ENCODE measurements at regions of chr6 and their contacts with region 1.

Region 1: DNA sequence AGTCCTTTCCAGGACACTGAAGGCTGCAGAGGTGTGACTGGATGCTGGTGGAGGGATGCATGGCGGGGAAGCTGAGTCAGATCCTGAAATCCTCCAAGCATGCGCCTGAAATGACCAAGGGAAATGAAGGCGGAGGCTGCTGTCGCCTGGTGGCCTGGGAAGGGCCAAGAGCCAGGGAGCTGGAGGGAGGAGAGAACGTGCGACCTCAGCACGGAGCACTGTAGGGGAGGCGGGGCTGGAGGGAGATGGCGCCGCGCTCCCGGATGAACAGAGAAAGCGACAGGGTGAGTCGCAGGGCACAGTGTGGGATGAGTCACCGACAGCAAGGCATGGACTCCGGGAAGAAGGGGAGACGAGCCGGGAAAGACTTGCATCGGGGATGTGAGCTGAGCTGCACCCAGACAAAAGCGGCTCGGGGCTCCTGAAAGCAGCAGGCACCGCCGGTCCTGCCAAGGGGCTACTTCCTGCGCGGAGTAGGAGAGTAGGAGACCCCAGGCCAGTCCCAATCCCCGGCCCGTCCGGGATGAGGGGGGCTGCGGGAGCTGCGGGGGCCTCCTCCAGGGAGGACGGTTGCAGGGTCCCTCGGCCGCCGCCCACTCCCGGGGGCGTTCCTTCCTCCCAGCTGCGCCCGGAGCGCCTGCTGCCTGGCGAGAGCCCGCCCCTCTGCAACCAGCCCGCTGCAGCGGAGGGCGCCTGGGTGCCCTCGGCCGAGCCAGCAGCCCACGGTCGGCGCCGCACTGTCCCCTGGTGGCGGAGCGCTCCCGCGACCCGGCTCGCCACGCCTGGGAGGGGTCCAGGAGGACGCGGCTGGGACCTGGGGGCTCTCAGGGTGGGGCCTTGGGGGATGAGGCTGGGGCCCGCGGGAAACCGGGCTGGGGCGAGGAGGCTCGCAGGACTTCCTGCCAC is 11.0 kb upstream of the NQO2 start:
- DNase-seq: peak; percentile 67 to 88 (median 80)
- ATAC-seq: peak; percentile 73
- H3K4me3 Mint-ChIP-seq: peak overlapping the region; percentile 82 to 99 (median 96)
- H3K27ac Mint-ChIP-seq: peak overlapping the region; percentile 98 to 100 (median 100)
- H3K4me1 Mint-ChIP-seq: peaks cover 14 to 31% (median 28%) of the 10 kb centered on the region in 4 donors
- H3K27me3 Mint-ChIP-seq: no peaks in the 10 kb centered on the region

Region 2: DNA sequence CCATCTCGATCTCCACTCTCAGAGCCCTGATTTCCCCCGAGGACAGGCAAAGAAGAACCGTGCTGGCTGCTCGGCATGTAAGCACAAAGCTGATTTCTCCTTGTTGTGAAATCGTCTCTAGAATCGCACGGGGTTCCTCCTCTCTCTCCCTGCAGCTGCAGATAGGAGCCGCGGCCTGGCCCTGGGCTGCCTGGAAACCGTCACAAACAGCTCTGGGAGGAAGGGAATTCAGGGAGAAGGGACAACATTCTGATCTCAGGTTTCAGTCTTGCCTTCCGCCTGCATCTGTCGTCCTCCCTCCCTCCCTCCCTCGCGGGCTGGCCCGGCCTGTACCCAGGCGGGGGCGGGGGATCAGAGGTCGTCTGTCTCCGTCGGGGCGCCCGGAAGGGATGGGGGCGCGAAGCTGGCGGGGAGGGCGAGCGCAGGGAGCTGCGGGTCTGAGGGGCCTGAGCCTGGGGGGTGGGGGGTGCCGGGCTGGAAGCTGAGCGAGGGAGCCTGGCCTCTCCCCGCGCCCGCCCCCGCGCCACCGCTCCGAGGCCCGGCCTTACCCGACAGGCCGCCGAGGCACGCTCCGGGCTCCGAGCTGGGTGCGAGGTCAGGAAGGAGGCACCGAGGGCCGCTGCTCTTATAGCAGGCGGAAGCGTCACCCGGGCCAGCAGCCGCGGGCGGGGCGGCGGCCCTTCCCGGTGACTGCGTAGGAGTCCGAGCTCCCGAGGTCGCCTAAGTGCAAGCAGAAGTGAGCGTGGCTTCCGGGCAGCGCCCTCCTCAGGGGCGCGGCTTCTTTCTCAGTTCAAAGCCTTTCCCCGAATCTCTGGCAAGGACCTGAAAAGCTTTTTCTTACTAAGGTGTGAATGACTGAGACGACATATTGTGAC is 147.2 kb before region 1 on chr6 and contains the start of gene SERPINB1:
- POLR2A ChIA-PET with region 1: interaction called, 76 read pairs
- DNase-seq: peak; percentile 56 to 82 (median 66)
- ATAC-seq: peak; percentile 78
- H3K4me3 Mint-ChIP-seq: peak within 1 kb of the TSS; percentile 86 to 95 (median 90)
- H3K27ac Mint-ChIP-seq: peak within 1 kb of the TSS; percentile 86 to 97 (median 94)
- H3K4me1 Mint-ChIP-seq: peaks cover 22 to 71% (median 50%) of the 10 kb centered on the region in 4 donors
- H3K27me3 Mint-ChIP-seq: no peaks in the 10 kb centered on the region
- polyA plus RNA-seq, gene SERPINB1: 121 to 130 (median 123) TPM

Region 3: DNA sequence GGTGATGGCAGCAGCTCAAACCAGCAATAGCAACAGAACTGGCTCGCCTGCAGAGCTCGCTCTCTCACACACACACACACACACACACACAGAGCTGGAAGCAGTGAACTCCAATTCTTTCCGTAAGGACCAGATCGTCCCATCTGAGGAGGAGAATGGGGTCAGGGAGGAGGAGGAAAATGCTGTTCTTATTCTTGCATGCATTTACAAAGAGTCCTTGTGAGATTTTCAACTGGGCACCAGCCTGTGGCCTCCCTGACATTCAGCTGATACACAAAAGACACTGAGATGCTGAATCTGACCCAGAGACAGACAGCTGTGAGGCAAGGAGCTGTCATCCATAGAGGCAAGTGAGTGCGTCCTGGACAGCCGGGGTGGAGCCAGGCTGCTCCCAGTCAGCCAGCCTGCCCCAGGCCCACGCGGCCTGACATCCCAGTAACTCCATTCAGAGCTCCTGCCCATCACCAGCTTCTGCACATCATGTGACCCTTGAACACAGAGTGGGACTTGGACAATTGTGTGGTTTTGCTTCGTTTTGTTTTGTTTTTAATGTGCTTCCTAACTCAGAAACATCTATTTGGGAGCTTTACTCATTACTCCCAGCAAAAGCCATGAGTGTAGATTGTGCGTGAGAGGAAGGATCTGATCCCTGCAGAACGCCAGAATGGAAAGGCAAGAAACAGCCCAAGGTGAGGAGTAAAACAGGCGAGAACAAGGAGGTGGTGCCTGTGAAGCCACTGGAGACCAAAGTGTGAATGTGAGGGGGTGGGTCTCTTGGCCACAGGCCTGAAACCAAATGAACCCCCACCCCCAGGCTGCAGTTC is 87.6 kb before region 1 on chr6:
- POLR2A ChIA-PET with region 1: interaction called, 26 read pairs
- DNase-seq: peak in 1 of 10 donors; percentile 12
- ATAC-seq: no peak
- H3K4me3 Mint-ChIP-seq: peak overlapping the region; percentile 97 to 100 (median 100)
- H3K27ac Mint-ChIP-seq: peak overlapping the region; percentile 91 to 98 (median 98)
- H3K4me1 Mint-ChIP-seq: peaks cover 40 to 71% (median 62%) of the 10 kb centered on the region in 4 donors
- H3K27me3 Mint-ChIP-seq: no peaks in the 10 kb centered on the region

Region 4: DNA sequence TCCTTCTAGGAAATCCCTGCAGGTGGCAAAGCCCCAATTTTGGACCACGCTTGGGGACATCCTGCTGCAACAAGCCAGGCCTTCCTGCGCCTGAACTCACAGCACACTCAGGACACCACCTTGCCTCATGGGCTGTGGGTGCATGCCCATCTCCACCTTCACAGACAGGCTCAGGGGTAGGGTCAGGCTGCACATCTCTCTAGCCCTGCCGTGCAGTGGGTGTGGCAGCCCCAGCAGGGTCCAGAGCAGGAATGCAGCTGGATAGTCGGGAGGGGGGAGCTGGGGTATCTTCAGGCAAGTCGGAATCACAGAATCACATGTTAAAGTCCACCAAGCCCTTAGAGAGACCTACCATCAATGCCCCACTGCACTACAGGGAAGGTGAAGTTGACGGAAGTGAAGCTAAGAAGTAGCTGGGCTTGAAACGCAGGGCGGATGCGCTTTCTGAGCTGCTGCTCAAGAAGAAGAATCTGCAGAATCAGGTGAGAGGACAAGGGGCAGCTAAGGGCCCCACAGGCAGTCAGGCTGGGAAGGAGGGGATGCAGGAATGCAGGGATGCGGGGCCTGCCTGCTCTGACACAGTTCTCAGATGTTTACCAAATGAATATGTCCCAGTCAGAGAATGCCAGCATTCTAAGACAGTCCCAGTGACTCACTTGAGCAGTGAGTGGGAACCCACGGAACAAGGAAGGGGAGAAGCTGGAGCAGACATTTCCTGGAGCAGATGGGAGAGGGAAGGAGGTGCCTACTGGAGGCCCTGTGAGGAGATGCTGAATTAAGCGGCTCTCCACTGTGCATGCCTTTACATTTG is 28.6 kb before region 1 on chr6:
- POLR2A ChIA-PET with region 1: interaction called, 29 read pairs
- DNase-seq: no peak
- ATAC-seq: no peak
- H3K4me3 Mint-ChIP-seq: no peak overlapping the region
- H3K27ac Mint-ChIP-seq: peak overlapping the region in 6 of 10 donors; percentile 40 to 96 (median 71)
- H3K4me1 Mint-ChIP-seq: peaks cover 19 to 62% (median 33%) of the 10 kb centered on the region in 4 donors
- H3K27me3 Mint-ChIP-seq: peaks cover 0 to 1% (median 0%) of the 10 kb centered on the region in 5 donors

Region 5: DNA sequence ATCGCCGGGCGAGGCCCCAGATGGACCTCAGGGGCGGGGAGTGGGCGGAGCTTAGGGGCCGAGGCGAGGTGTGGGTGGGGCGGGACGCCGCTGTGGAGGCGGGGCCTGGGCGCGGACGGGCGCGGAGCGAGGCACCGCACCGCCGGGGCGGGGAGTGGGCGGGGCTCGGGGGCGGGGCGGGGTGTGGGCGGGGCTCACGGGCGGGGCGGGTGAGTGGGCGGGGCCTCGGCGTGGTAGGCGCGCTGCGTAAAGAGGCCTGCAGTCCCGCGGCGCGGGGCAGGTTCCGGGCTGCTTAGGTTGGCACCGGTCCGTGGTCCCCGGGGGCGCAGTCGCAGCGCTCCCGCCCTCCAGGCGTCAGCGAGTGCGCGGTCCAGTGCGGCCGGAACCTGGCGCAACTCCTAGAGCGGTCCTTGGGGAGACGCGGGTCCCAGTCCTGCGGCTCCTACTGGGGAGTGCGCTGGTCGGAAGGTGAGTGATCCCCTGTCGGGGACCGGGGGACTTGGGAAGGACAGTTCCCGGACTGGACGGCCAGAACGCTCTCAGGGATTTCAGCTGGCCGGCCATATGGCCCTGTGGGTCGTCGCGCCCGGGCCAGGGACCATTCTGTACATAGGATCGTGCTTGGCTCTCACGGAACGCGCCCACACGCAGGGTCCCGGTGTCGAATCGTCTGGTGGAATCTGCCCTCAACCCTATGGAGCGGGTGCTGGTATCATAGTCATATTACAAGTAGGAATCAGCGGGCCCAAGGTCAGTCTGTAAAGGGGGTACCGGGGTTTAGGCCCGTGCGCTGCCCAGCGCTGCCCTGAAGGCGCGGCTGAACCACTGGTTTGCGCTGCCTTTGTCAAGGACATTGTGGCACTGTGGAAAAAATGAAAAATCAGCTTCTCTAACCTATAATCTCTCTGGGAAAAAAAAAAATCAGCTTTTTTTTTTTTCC is 11.2 kb after region 1 on chr6 and contains the start of gene NQO2:
- POLR2A ChIA-PET with region 1: interaction called, 39 read pairs
- DNase-seq: peak; percentile 73 to 93 (median 85)
- ATAC-seq: peak; percentile 72 to 79
- H3K4me3 Mint-ChIP-seq: peak within 1 kb of the TSS; percentile 85 to 97 (median 90)
- H3K27ac Mint-ChIP-seq: peak within 1 kb of the TSS; percentile 81 to 97 (median 92)
- H3K4me1 Mint-ChIP-seq: peaks cover 11 to 29% (median 25%) of the 10 kb centered on the region in 4 donors
- H3K27me3 Mint-ChIP-seq: no peaks in the 10 kb centered on the region
- polyA plus RNA-seq, gene NQO2: 37.9 to 48.1 (median 39.0) TPM

Region 6: GRCh38 chr6:3068329-3069214 is 79.9 kb after region 1 on chr6 and contains the start of gene RIPK1:
- POLR2A ChIA-PET with region 1: interaction called, 57 read pairs
- DNase-seq: peak; percentile 89 to 96 (median 94)
- ATAC-seq: peak; percentile 76 to 78
- H3K4me3 Mint-ChIP-seq: peak within 1 kb of the TSS; percentile 93 to 99 (median 94)
- H3K27ac Mint-ChIP-seq: peak within 1 kb of the TSS; percentile 93 to 99 (median 98)
- H3K4me1 Mint-ChIP-seq: peaks cover 20 to 78% (median 57%) of the 10 kb centered on the region in 4 donors
- H3K27me3 Mint-ChIP-seq: no peaks in the 10 kb centered on the region
- polyA plus RNA-seq, gene RIPK1: 9.5 to 17.5 (median 11.2) TPM

Measured in naive thymus-derived CD8-positive, alpha-beta T cell (primary cell).